ENCODE measurements at regions of chr9 and their contacts with region 1.

Region 1: GRCh38 chr9:37229882-37230487 is 109.6 kb downstream of the ZCCHC7 start:
- DNase-seq: no peak
- ATAC-seq: no peak
- H3K4me3 ChIP-seq: no peak overlapping the region
- H3K27ac ChIP-seq: no peak overlapping the region
- H3K4me1 ChIP-seq: no peaks in the 10 kb centered on the region
- H3K27me3 ChIP-seq: no peaks in the 10 kb centered on the region
- CTCF ChIP-seq: no peak
- POLR2A ChIP-seq: no peak

Region 2: DNA sequence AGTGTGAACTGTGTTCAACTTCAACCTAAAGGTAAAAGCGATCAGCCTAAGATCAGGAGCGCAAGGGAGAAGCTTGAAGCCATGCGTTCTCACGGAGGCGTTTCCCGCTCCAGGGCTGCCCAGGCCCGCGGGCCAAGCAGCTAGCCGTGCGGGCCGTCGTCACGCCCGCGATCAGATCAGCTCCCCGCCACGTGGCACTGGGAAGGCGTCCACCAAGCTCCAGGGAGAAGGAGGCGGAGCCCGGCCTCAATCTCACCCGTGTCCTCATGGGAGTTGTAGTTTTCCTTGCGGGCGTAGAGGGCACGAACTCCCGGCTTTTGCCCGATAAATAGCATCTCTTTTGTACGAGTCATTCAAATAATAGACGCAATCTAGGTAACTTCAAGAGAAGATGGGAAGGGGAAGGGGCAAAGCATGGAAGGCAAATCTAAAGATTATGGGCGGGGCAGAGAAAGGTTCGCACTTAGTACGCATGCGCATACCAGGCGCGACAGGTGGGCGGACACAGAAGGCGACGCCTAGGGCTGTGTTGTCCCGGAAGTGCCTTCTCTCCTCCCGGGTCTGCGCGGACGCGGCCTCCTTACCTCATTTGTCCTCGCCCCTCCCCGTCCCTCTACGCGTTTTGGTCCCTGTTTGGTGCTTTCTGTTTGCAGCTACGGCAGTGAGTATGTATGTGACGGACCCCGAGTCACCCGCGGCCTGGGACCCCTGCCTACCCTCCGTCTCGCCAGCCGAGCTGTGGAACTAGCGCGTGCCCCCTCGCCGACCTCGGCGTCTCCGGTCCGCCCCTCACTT is 150.4 kb before region 1 on chr9:
- in situ Hi-C with region 1: no loop called
- intact Hi-C with region 1: no loop called
- DNase-seq: peak; percentile 88 to 92
- ATAC-seq: peak; percentile 98
- H3K4me3 ChIP-seq: peak overlapping the region; percentile 79 to 100 (median 99)
- H3K27ac ChIP-seq: peak overlapping the region; percentile 88 to 94 (median 92)
- H3K4me1 ChIP-seq: peaks cover 20 to 24% of the 10 kb centered on the region in 2 donors
- H3K27me3 ChIP-seq: no peaks in the 10 kb centered on the region
- CTCF ChIP-seq: no peak
- POLR2A ChIP-seq: peak; percentile 69 to 73

Region 3: DNA sequence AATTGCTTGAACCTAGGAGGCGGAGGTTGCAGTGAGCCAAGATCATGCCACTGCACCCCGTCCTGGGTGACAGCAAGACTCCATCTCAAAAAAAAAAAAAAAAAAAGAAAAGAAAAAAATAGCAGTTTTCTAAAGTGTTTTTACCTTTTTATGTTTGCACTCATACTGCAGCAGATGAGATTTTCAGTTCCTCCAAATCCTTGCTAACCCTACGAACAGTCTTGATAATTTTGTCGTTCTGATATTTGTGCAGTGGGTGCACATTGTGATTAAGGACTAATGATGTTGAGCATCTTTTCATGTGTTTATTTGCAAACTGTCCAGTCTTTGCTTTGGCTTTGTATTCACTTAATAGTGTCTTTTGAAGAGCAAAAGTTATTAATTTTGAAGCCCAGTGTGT is 66.7 kb before region 1 on chr9:
- in situ Hi-C with region 1: no loop called
- intact Hi-C with region 1: no loop called
- DNase-seq: no peak
- ATAC-seq: no peak
- H3K4me3 ChIP-seq: no peak overlapping the region
- H3K27ac ChIP-seq: no peak overlapping the region
- H3K4me1 ChIP-seq: no peaks in the 10 kb centered on the region
- H3K27me3 ChIP-seq: no peaks in the 10 kb centered on the region
- CTCF ChIP-seq: no peak
- POLR2A ChIP-seq: no peak

Region 4: GRCh38 chr9:37191403-37192089 is 38.4 kb before region 1 on chr9:
- in situ Hi-C with region 1: no loop called
- intact Hi-C with region 1: loop called (anchors 5 kb)
- DNase-seq: no peak
- ATAC-seq: no peak
- H3K4me3 ChIP-seq: no peak overlapping the region
- H3K27ac ChIP-seq: no peak overlapping the region
- H3K4me1 ChIP-seq: peaks cover 4 to 5% of the 10 kb centered on the region in 2 donors
- H3K27me3 ChIP-seq: no peaks in the 10 kb centered on the region
- CTCF ChIP-seq: no peak
- POLR2A ChIP-seq: no peak

Region 5: DNA sequence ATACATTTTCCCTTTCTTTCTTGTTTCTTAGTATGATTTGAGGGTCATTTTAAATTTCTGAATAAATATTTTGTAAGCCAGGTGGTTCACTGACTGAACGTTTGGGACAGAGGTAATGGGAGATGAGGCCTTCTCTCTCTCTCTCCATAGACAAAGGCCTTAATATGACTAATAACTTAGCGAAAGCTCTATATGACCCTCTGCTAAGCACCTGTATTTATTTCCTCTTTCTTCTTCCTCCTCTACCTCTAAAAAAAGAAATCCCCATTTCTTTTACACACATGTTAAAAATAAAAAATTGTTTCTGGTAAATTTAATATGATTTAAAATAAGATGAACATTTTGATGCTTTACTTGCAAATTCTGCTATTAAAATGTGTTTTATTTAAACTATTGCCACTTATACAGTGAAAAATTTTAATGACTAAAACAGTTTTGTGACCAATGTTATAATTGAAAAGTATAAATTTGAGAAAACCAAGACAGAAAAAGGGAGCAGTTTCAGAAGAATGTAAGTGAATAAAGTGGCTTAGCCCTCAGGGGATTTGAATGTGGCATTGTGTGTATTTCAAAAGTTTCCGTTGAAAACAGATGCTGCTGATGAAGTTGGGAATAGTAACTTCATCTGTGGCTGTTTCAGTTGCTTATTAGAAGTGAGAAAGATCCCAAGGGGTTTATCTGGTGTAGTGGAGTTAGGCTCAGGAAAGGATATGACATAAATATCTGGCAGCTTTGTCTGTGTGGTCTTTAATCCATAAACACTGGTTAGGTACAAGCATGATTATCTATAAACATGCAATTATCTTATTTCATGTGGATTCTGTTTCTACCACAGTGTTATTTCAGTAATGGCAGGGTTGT is 63.9 kb after region 1 on chr9:
- in situ Hi-C with region 1: loop called in 1 of 4 experiments (anchors 10 kb)
- intact Hi-C with region 1: no loop called
- DNase-seq: no peak
- ATAC-seq: no peak
- H3K4me3 ChIP-seq: no peak overlapping the region
- H3K27ac ChIP-seq: no peak overlapping the region
- H3K4me1 ChIP-seq: peaks cover 6 to 14% of the 10 kb centered on the region in 2 donors
- H3K27me3 ChIP-seq: no peaks in the 10 kb centered on the region
- CTCF ChIP-seq: no peak
- POLR2A ChIP-seq: no peak

Measured in gastrocnemius medialis (tissue), 4 donors.